Activated B cell treated with CpG ODN at 0.5 μM for 24 hours (primary cell): ENCODE measurements at regions of chr9 and their contacts with region 1.

Region 1: DNA sequence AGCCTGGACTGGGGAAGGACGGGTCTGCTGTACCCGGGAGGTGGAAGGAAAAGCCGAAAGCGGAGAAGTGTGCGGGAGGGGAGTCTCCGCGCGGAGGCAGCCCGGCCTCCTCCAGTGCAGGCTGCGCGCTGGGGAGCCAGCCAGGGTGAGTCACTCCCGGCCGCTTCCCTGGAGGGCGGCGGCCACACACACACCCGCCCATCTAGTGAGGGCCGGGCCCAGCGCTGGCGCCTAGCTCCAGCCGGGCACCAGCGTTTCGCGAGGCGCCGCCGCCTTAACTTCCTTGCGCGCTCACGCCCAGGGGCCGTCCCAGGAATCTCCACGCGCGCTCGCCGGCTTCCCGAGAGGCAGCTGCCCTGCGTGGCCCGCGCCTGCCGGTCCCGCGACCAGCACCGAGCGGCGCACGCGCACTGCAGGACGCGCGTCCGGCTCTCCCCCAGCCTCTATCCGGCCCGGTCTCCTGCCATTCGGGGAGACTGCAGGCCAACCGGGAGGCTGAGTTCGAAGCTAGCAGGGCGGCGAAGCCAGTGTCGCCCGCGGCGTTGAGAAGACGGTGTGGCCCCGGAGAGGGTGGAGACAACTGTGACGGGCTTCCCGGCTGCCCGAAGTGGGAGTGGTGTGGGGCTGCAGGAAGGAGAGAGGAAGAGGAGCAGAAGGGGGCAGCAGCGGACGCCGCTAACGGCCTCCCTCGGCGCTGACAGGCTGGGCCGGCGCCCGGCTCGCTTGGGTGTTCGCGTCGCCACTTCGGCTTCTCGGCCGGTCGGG is at the start of gene JAK2:
- DNase-seq: peak; percentile 83
- ATAC-seq: peak; percentile 80
- H3K4me3 Mint-ChIP-seq: peak within 1 kb of the TSS; percentile 87
- H3K27ac Mint-ChIP-seq: peak within 1 kb of the TSS; percentile 95
- H3K4me1 Mint-ChIP-seq: peaks cover 48% of the 10 kb centered on the region
- H3K27me3 Mint-ChIP-seq: no peaks in the 10 kb centered on the region
- CTCF ChIP-seq: no peak
- total RNA-seq, gene JAK2: 19.2 and 21.3 TPM in 2 replicates

Region 2: DNA sequence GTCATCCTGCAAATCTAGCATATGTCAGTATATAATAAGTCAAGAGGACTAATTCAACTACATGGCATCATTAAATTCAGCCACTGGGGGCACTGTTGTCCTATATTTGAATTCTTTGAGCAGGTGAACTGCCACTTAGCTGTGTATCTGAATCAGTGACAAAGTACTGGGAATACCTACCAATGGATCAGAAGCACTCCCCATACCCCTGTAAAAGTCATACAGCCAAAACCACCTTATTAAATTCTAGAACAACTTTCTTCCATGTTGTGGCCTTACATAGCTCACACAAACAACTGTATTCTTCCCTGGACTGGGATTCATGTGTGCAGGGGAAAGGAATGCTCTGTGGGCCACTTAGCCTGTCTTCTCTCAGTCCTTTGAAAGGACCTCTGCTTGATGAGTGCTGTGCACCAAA is 380.1 kb before region 1 on chr9:
- CTCF ChIA-PET with region 1: no interaction called
- POLR2A ChIA-PET with region 1: no interaction called
- intact Hi-C with region 1: loop called (anchors 2 kb)
- DNase-seq: no peak
- ATAC-seq: peak; percentile 70
- H3K4me3 Mint-ChIP-seq: no peak overlapping the region
- H3K27ac Mint-ChIP-seq: no peak overlapping the region
- H3K4me1 Mint-ChIP-seq: peaks cover 4% of the 10 kb centered on the region
- H3K27me3 Mint-ChIP-seq: peaks cover 4% of the 10 kb centered on the region
- CTCF ChIP-seq: no peak

Region 3: GRCh38 chr9:4762108-4762885 is 222.5 kb before region 1 on chr9:
- CTCF ChIA-PET with region 1: interaction called, 54 read pairs
- POLR2A ChIA-PET with region 1: interaction called, 12 read pairs
- intact Hi-C with region 1: loop called (anchors 1 kb)
- DNase-seq: peak; percentile 61
- ATAC-seq: peak; percentile 70
- H3K4me3 Mint-ChIP-seq: peak overlapping the region; percentile 72
- H3K27ac Mint-ChIP-seq: peak overlapping the region; percentile 54
- H3K4me1 Mint-ChIP-seq: peaks cover 24% of the 10 kb centered on the region
- H3K27me3 Mint-ChIP-seq: no peaks in the 10 kb centered on the region
- CTCF ChIP-seq: no peak

Region 4: DNA sequence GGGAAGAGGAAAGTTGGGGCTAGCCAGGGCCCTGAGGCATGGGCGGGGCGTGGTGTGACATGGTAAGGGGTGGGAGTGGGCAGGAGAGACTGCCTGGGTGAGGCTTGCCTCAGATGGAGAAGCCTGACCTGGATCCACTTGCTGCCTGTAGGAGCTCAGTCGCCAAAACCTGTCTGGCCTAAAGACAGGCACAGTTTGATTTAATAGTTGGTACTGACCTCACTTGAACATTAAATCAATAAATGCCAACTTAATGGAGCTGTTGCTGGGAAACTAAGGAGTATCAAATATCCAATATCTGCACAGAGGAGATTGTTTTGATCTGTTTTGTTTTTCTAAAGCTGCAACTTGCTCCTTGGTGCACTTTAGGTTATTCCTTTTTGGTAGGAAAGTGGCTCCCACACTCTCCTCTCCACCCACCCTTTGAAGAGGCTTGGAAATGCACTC is 105.7 kb before region 1 on chr9:
- CTCF ChIA-PET with region 1: no interaction called
- POLR2A ChIA-PET with region 1: no interaction called
- intact Hi-C with region 1: no loop called
- DNase-seq: no peak
- ATAC-seq: no peak
- H3K4me3 Mint-ChIP-seq: no peak overlapping the region
- H3K27ac Mint-ChIP-seq: no peak overlapping the region
- H3K4me1 Mint-ChIP-seq: no peaks in the 10 kb centered on the region
- H3K27me3 Mint-ChIP-seq: no peaks in the 10 kb centered on the region
- CTCF ChIP-seq: no peak

Region 5: DNA sequence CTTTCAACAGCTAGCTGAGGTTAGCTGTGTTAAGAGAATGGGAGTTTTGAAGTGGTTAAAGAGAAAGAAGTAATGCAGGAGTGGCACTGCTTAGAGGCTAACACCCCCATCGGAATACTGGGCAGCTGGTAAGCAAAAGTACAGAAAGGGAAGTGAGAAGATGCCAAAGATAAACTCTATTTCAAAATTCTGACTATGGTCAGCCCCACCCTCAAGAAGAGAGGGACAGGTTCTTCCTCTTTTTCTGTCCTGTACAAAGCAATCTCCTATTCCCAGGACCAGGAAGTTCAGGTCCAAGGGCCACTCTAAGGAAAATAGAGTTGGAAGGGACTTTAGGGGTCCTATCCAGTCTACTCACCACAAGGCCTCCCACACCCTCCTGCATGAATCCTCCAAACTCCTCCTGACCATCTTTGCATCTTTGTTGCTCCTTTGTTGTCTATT is 45.7 kb before region 1 on chr9:
- CTCF ChIA-PET with region 1: interaction called, 7 read pairs
- POLR2A ChIA-PET with region 1: interaction called, 7 read pairs
- intact Hi-C with region 1: loop called (anchors 1 kb)
- DNase-seq: no peak
- ATAC-seq: peak; percentile 92
- H3K4me3 Mint-ChIP-seq: peak overlapping the region; percentile 42
- H3K27ac Mint-ChIP-seq: peak overlapping the region; percentile 79
- H3K4me1 Mint-ChIP-seq: peaks cover 60% of the 10 kb centered on the region
- H3K27me3 Mint-ChIP-seq: no peaks in the 10 kb centered on the region
- CTCF ChIP-seq: no peak

Region 6: DNA sequence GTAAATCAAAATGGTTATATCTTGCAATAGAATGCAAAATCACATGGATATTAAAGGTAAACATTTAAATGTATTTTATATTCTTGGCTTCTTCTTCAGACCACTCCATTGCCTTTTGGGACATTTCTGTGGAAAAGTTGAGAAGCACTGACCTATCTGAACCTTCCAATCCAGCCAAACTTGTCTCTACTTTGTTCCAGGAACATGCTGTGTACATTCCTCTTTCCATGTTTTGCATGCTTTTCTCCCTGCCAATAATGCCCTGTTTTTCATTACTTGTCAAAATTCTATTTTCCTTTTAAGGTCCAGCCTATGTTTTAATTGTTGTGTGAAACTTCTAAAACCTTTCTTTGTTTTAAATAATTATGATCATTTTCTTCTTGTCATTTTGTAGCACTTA is 28.6 kb after region 1 on chr9:
- CTCF ChIA-PET with region 1: no interaction called
- POLR2A ChIA-PET with region 1: no interaction called
- intact Hi-C with region 1: no loop called
- DNase-seq: no peak
- ATAC-seq: no peak
- H3K4me3 Mint-ChIP-seq: no peak overlapping the region
- H3K27ac Mint-ChIP-seq: no peak overlapping the region
- H3K4me1 Mint-ChIP-seq: peaks cover 14% of the 10 kb centered on the region
- H3K27me3 Mint-ChIP-seq: no peaks in the 10 kb centered on the region
- CTCF ChIP-seq: no peak

Region 7: GRCh38 chr9:5832543-5833529 is 848.0 kb after region 1 on chr9 and contains the start of gene ERMP1:
- CTCF ChIA-PET with region 1: no interaction called
- POLR2A ChIA-PET with region 1: no interaction called
- intact Hi-C with region 1: loop called (anchors 2 kb)
- DNase-seq: peak; percentile 88
- ATAC-seq: peak; percentile 88
- H3K4me3 Mint-ChIP-seq: peak within 1 kb of the TSS; percentile 90
- H3K27ac Mint-ChIP-seq: peak within 1 kb of the TSS; percentile 83
- H3K4me1 Mint-ChIP-seq: peaks cover 33% of the 10 kb centered on the region
- H3K27me3 Mint-ChIP-seq: no peaks in the 10 kb centered on the region
- CTCF ChIP-seq: peak; percentile 22
- total RNA-seq, gene ERMP1: 7.3 and 7.5 TPM in 2 replicates